A673 (cell line): ENCODE measurements at regions of chr19 and their contacts with region 1.

Region 1: GRCh38 chr19:9668544-9668943 is 6.4 kb downstream of the ZNF562 start:
- DNase-seq: no peak
- H3K4me3 ChIP-seq: no peak overlapping the region
- H3K27ac ChIP-seq: no peak overlapping the region
- H3K4me1 ChIP-seq: no peaks in the 10 kb centered on the region
- H3K27me3 ChIP-seq: no peaks in the 10 kb centered on the region
- CTCF ChIP-seq: no peak

Region 2: DNA sequence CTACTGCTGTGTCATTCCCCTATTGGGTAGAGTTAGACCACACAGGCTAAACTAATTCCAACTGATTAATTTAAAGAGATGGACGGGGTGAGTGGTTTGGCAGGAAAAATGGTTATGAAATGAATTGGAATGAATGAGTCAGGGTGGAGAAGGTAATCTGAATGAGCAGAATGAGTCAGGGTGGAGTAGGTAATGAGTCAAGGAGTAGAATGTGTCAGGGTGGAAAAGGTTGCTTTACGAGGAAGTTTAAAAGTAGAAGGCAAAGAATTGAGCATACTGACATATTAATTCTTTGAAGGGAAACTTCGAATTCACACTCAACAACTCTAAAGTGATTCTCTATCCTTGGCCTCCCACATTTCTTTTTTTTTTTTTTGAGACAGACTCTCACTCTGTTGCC is 71.5 kb before region 1 on chr19:
- CTCF ChIA-PET with region 1: no interaction called
- POLR2A ChIA-PET with region 1: no interaction called
- intact Hi-C with region 1: no loop called
- DNase-seq: no peak
- H3K4me3 ChIP-seq: no peak overlapping the region
- H3K27ac ChIP-seq: no peak overlapping the region
- H3K4me1 ChIP-seq: no peaks in the 10 kb centered on the region
- H3K27me3 ChIP-seq: no peaks in the 10 kb centered on the region
- CTCF ChIP-seq: no peak

Region 3: DNA sequence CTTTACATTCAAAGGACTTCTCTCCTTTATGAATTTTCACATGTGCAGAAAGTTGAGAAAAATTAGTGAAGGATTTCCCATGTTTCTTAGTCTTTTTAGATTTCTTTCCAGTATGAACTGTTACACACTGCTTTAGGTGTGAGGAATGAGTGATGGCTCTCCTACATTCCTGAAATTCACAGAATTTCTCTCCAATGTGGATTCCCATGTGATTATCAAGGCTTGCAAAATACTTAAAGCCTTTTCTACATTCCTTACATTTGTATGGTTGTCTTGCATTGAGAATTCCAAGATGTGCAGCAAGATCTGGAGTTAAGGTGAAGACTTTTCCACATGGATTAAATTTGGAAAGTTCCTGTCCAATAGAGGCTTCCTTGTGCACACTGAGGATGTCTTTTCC is 22.2 kb after region 1 on chr19:
- CTCF ChIA-PET with region 1: no interaction called
- POLR2A ChIA-PET with region 1: interaction called, 20 read pairs
- intact Hi-C with region 1: no loop called
- DNase-seq: no peak
- H3K4me3 ChIP-seq: no peak overlapping the region
- H3K27ac ChIP-seq: no peak overlapping the region
- H3K4me1 ChIP-seq: no peaks in the 10 kb centered on the region
- H3K27me3 ChIP-seq: no peaks in the 10 kb centered on the region
- CTCF ChIP-seq: no peak